ENCODE measurements at regions of chr14 and their contacts with region 1.

Region 1: DNA sequence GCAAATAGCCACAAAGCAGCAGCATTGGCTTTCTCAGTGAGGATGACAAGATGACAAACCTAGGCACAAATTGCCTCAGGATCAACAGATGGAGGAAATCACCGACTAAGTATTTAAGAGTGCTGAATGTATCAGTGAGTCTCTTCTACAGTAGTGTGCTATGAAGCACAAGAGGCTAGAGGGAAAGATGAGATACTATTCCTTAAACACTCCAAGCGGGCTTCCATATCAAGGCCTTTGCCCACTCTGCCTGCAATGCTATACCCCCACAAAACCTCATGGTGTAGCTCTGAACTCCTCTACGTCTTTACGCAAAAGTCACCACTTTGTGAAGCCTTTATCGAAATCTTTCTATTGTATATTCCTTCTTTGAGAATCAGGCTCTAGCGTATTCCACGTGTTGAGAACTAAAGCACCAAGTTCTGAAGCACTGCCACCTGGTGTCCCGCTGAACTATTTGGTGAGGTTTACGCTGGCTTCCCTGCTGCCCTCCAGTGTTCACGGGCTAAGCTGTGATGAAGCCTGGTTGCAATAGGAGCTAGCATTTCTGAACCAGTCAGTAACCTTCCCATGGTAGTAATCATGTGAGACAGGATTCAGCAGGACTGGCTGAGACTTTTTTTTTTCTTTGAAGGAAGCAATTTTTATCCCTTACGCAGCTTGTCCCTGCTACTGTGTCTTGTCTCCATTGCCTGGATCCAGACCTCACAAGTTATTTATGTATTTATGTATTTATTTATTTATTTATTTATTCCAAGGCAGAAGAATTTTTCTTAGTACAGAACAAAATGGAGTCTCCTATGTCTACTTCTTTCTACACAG is 426.5 kb upstream of the OR4E1 start:
- DNase-seq: peak; percentile 90 to 94 (median 92)
- H3K4me3 ChIP-seq: no peak overlapping the region
- H3K27ac ChIP-seq: no peak overlapping the region
- H3K4me1 ChIP-seq: peaks cover 24 to 56% (median 51%) of the 10 kb centered on the region in 4 experiments
- H3K27me3 ChIP-seq: no peaks in the 10 kb centered on the region

Region 2: GRCh38 chr14:21978184-21978998 is 121.8 kb before region 1 on chr14:
- CTCF ChIA-PET with region 1: interaction called, 12 read pairs
- POLR2A ChIA-PET with region 1: interaction called, 3 read pairs
- DNase-seq: peak; percentile 53 to 78 (median 68)
- H3K4me3 ChIP-seq: no peak overlapping the region
- H3K27ac ChIP-seq: no peak overlapping the region
- H3K4me1 ChIP-seq: no peaks in the 10 kb centered on the region
- H3K27me3 ChIP-seq: no peaks in the 10 kb centered on the region

Region 3: DNA sequence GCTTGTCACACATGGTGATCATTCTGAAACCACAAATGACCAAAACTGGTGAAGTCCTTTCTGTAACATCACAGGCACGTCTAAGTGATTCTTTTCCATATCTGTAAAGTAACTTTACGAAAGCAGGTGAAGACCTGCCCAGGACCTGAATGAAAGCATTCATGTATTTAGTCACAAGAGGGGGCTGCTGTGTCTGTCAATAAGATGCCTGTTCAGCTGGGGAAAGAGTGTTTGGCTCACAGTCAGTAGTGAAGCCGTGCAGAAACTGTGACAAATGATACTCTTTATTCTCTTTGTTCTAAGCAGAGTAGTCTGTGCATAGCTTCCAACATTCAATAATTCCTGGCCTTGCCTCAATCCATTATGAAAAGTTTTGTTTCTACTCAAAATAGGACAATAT is 53.0 kb before region 1 on chr14:
- CTCF ChIA-PET with region 1: interaction called, 80 read pairs
- POLR2A ChIA-PET with region 1: no interaction called
- DNase-seq: peak; percentile 64 to 81 (median 78)
- H3K4me3 ChIP-seq: peak overlapping the region in 1 of 7 experiments; percentile 29
- H3K27ac ChIP-seq: no peak overlapping the region
- H3K4me1 ChIP-seq: peaks cover 4 to 33% (median 14%) of the 10 kb centered on the region in 4 experiments
- H3K27me3 ChIP-seq: no peaks in the 10 kb centered on the region

Region 4: DNA sequence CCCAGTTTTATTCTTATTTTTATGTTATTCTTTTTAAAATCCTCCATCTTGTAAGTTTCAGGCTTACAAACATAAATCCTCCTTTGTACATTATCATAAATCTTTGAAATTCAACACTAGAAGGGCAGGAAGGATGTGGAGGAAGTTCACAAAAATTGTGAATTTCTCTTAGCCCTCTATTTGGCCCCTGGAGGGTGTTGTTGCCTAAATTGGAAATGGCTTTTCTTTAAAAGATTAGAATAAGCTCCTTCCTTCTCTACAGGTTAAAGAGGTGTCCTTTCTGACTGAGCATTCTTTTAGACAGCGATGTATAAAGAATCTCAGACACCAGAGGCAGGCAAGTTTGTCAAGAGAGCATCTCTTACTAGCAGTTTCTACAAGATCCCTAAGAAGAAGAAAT is 34.8 kb before region 1 on chr14:
- CTCF ChIA-PET with region 1: interaction called, 71 read pairs
- POLR2A ChIA-PET with region 1: no interaction called
- DNase-seq: peak in 2 of 3 donors; percentile 32 to 54
- H3K4me3 ChIP-seq: peak overlapping the region in 6 of 7 experiments; percentile 28 to 66 (median 42)
- H3K27ac ChIP-seq: peak overlapping the region; percentile 17 to 64
- H3K4me1 ChIP-seq: peaks cover 11 to 46% (median 27%) of the 10 kb centered on the region in 4 experiments
- H3K27me3 ChIP-seq: no peaks in the 10 kb centered on the region

Region 5: DNA sequence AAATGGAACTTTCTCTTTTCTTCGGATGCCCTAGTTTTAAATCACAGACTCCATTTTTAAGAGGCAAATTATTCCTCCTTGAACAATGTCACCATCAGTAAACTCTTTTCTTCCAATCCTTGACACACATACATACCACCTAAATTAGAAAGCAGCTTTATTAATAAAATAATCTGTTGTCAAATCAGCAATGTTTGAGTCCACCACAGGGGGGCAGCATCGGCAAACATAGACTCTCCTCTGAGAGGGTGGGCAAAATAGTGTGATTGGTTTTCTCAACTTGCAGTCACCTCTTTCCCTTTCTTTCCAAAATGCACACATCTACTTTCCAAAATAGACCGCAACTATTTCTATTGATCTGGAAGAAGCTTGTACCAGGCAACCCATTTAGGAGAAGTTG is 11.9 kb after region 1 on chr14:
- CTCF ChIA-PET with region 1: interaction called, 84 read pairs
- POLR2A ChIA-PET with region 1: no interaction called
- DNase-seq: peak in 2 of 3 donors; percentile 49 to 66
- H3K4me3 ChIP-seq: no peak overlapping the region
- H3K27ac ChIP-seq: no peak overlapping the region
- H3K4me1 ChIP-seq: peaks cover 0 to 7% (median 1%) of the 10 kb centered on the region in 4 experiments
- H3K27me3 ChIP-seq: no peaks in the 10 kb centered on the region

Region 6: DNA sequence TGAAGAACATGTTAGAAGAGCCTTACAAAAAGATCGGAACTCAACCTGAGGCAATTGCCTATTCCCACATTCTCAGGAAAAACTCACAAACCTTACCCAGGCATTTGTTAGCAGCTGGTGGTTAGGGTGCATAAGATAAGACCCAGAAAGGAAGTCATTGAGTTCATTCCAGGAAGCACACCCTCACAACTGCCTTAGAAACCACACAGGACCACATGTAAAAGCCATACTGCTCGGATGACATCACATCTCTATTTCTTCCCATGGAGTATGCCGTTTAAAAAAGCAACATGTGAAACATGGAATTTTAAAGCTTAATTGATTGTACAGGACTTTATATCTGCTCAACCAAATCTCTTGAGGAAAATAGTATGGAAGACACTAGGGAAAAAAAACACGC is 77.7 kb after region 1 on chr14:
- CTCF ChIA-PET with region 1: no interaction called
- POLR2A ChIA-PET with region 1: no interaction called
- DNase-seq: peak; percentile 84 to 96 (median 92)
- H3K4me3 ChIP-seq: peak overlapping the region in 3 of 7 experiments; percentile 0 to 48 (median 35)
- H3K27ac ChIP-seq: no peak overlapping the region
- H3K4me1 ChIP-seq: peaks cover 9 to 35% (median 23%) of the 10 kb centered on the region in 4 experiments
- H3K27me3 ChIP-seq: peaks cover 0 to 67% (median 21%) of the 10 kb centered on the region in 5 experiments

Measured in common myeloid progenitor, CD34-positive (primary cell).